ENCODE measurements at regions of chr15 and their contacts with region 1.

Region 1: GRCh38 chr15:34223904-34224596 is 766 bp upstream of the EMC4 start:
- DNase-seq: peak; percentile 20
- H3K4me3 ChIP-seq: peak overlapping the region; percentile 73
- H3K27ac ChIP-seq: peak overlapping the region; percentile 82
- H3K4me1 ChIP-seq: peaks cover 6% of the 10 kb centered on the region
- H3K27me3 ChIP-seq: no peaks in the 10 kb centered on the region
- CTCF ChIP-seq: no peak

Region 2: DNA sequence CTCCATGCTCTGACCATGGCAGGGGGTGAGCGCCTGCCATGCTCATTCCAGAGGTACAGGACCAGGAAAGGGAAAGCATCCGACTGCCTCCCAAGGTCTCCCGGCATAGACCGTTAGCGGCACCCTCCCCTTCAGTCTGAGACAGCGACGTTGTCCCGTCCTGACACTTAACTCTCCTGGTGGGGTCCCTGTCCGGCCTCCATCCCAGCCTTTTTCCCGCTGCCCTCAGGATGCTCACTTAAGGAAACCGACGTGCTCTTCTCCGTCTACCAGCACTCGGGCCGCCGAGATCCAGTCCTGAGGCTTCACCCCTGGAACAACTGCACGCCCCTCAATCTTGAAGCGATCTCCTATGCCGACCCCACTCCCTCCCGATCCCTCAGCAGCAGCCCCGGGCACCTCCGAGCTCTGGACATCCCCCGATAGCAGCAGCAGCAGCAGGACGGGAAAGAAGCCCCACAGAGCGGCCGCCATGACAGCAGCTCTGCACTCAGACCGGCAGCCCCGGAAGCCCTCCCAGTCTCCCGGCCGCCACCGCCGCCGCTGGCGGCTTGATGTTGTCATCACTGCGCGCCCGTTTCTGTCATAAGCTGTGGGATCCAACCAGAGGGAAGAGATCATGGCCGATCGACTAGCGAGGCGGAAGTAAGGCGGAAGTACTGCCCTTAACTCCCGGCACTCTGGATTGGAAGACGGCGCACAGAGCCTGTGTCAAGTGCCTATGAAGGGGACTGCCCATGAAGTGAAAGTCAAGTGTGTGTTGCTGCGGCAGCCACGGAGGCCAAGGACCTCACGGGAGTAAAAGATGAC is 122.5 kb before region 1 on chr15 and contains the starts of genes EMC7 and PGBD4:
- intact Hi-C with region 1: loop called (anchors 2 kb)
- DNase-seq: peak; percentile 99
- H3K4me3 ChIP-seq: peak within 1 kb of the TSS; percentile 90
- H3K27ac ChIP-seq: peak within 1 kb of the TSS; percentile 82
- H3K4me1 ChIP-seq: peaks cover 12% of the 10 kb centered on the region
- H3K27me3 ChIP-seq: no peaks in the 10 kb centered on the region
- CTCF ChIP-seq: no peak
- total RNA-seq, gene EMC7: 73.1 to 78.6 TPM
- total RNA-seq, gene PGBD4: 0.69 to 1.3 TPM

Region 3: DNA sequence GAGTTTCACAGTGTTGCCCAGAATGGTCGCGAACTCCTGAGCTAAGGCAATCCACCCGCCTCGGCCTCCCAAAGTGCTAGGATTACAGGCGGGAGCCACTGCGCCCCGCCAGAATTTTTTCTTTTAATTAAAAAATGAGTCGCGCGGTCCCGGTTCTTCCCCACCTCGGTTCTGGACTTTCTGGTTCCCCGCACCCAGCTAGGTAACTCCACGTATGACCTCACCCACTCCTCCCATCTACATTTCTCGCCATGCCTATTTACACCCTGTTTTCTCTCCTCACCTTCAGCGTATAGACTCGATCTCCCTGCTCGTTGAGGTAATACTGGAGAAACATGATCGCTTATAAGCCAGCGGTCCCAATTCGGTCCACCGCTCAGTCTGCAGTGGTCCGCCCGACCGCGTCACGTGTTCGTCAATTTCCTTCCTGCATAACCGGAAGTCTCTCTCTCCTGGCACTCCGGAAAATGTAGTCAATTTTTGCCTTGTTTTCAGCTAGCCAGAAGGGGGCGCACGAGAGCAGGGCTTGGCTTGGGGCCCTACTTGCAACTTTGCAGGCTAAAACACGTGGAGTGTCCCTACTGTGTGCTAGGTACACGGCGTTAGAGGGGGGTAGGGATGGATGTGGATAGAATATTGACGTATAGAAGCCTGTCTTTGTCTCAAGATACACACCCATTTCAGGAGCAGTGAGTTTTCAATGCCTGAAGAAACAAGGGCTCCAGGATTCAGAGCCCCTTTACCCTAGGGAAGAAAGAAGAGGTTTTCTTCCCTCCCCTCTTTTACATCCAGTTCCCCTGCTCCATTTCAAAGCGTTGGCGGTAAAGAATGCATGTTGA is 118.9 kb after region 1 on chr15 and contains the starts of genes NOP10 and NUTM1:
- intact Hi-C with region 1: loop called (anchors 10 kb)
- DNase-seq: peak; percentile 97
- H3K4me3 ChIP-seq: peak within 1 kb of the TSS; percentile 65
- H3K27ac ChIP-seq: peak within 1 kb of the TSS; percentile 90
- H3K4me1 ChIP-seq: no peaks in the 10 kb centered on the region
- H3K27me3 ChIP-seq: no peaks in the 10 kb centered on the region
- CTCF ChIP-seq: peak; percentile 92
- total RNA-seq, gene NOP10: 143 to 184 TPM
- total RNA-seq, gene NUTM1: not detected

Region 4: DNA sequence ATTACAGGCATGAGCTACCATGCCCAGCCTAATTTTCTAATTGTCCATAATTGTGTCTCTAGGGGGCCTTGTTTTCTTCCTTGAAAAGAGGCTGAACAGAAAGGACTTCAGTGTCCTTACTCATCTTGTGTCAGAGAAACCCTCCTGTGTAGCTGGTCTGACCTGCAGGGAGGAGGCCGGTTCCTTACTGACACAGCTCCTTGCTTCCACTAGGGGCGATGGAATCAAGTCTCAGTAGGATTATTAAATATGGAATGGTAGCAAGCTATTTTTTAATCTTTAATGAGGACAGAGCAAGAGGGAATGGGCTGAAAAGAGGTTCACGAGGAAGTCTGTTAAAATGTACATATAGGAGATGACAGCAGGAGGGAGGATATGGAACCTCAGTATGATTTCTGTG is 134.3 kb after region 1 on chr15:
- intact Hi-C with region 1: no loop called
- DNase-seq: no peak
- H3K4me3 ChIP-seq: no peak overlapping the region
- H3K27ac ChIP-seq: no peak overlapping the region
- H3K4me1 ChIP-seq: no peaks in the 10 kb centered on the region
- H3K27me3 ChIP-seq: no peaks in the 10 kb centered on the region
- CTCF ChIP-seq: no peak

Measured in colonic mucosa (tissue), 4 donors.